OCI-LY7 (cell line): ENCODE measurements at regions of chr12 and their contacts with region 1.

Region 1: GRCh38 chr12:1117970-1118563 is 127.0 kb downstream of the ERC1 start:
- DNase-seq: peak; percentile 81
- H3K4me3 ChIP-seq: no peak overlapping the region
- H3K27ac ChIP-seq: no peak overlapping the region
- H3K4me1 ChIP-seq: peaks cover 4% of the 10 kb centered on the region
- CTCF ChIP-seq: peak; percentile 99

Region 2: DNA sequence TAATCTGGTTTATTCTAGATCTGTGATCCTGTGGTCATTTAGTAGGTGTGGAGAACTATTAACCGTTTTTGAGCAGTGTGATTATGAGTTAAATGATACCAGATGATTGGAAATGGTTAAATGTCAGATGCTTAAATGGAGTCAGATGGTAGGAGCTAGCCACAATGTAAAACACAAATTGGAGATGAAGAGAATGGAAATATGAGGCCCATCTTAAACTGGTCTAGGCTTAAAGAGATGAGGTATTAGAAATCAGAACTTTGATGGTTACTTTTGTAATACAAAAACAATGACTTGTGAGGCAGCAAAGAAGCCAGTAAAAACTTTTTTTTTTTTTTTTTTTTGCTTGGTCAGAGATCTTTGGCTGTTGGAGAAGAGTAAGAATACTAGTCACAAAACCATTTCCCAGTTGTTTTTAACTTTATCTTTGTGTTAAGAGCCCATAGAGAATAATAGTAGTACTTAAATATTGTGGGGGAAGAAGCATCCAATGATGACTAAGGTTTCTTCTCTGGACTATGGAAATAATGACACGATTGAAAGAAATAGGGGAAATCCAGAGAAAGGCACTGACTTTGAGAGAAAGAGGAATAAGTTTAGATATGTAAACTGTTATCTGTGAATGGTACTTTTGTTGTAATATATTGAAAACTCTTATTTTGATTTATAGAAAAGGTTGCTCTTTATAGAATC is 269.7 kb before region 1 on chr12:
- CTCF ChIA-PET with region 1: no interaction called
- POLR2A ChIA-PET with region 1: no interaction called
- intact Hi-C with region 1: no loop called
- DNase-seq: no peak
- H3K4me3 ChIP-seq: no peak overlapping the region
- H3K27ac ChIP-seq: no peak overlapping the region
- H3K4me1 ChIP-seq: no peaks in the 10 kb centered on the region
- CTCF ChIP-seq: no peak

Region 3: GRCh38 chr12:1605129-1606020 is 487.3 kb after region 1 on chr12:
- CTCF ChIA-PET with region 1: interaction called, 3 read pairs
- POLR2A ChIA-PET with region 1: no interaction called
- intact Hi-C with region 1: loop called (anchors 1 kb)
- DNase-seq: peak; percentile 85
- H3K4me3 ChIP-seq: peak overlapping the region; percentile 52
- H3K27ac ChIP-seq: no peak overlapping the region
- H3K4me1 ChIP-seq: peaks cover 60% of the 10 kb centered on the region
- CTCF ChIP-seq: peak; percentile 88